T-cell (primary cell): ENCODE measurements at regions of chr20 and their contacts with region 1.

Region 1: DNA sequence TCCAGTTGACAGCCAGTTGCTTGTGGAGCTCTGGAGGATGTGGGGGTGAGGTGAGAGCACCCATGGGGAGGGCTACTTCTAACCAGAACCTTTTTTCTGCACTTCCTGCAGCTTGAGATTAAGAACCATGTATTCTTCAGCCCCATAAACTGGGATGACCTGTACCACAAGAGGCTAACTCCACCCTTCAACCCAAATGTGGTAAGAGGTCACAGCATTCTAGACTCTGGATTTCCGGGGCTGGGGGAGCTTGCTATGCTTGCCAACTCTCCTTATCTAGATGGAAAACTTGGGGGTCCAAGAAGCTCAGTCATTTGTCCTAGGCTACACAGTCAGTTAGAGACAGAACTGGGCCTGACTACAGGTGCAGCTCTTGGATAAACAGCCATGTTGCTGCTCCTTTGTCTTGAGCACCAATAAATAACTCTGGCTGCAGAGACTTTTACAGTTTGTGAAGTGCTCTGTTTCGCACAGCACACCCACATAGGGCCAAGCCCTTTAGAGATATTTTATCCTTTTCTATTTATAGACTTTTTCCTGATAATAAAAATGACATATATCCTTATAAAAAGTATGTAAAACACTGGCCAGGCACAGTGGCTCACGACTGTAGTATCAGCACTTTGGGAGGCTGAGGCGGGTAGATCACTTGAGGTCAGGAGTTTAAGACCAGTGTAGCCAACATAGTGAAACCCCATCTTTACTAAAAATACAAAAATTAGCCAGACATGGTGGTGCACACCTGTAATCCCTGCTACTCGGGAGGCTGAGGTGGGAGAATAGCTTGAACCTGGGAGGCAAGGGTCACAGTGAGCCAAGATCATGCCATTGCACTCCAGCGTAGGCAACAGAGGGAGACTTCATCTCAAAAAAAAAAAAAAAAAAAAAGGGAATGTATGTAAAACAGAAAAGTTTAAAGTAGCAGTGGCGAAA is 10.6 kb upstream of the IFT52 start:
- DNase-seq: no peak
- ATAC-seq: no peak
- H3K4me3 ChIP-seq: no peak overlapping the region
- H3K4me3 Mint-ChIP-seq: no peak overlapping the region
- H3K27ac ChIP-seq: no peak overlapping the region
- H3K27ac Mint-ChIP-seq: no peak overlapping the region
- H3K4me1 ChIP-seq: no peaks in the 10 kb centered on the region
- H3K4me1 Mint-ChIP-seq: peaks cover 0 to 3% (median 0%) of the 10 kb centered on the region in 3 donors
- H3K27me3 ChIP-seq: peaks cover 0 to 7% of the 10 kb centered on the region in 2 experiments
- H3K27me3 Mint-ChIP-seq: no peaks in the 10 kb centered on the region

Region 2: DNA sequence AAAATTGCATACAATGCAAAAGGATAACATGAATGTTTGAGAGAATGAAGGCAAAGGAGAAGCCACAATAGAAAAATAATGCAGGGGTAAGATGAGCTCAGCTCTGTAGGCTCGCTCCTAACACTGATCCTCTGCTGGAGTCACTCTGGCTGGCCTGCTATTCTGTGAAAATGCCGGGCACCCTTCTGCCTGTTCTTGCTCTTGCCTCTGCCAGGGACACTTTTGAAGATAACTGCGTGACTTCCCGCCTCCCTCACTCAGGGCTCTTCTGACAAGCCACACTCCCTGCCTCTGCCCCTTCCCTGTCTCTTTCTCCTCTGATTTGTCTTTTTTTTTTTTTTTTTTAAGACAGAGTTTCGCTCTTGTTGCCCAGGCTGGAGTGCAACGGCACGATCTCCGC is 51.5 kb after region 1 on chr20:
- CTCF ChIA-PET with region 1: no interaction called
- POLR2A ChIA-PET with region 1: no interaction called
- DNase-seq: no peak
- ATAC-seq: no peak
- H3K4me3 ChIP-seq: no peak overlapping the region
- H3K4me3 Mint-ChIP-seq: no peak overlapping the region
- H3K27ac ChIP-seq: no peak overlapping the region
- H3K27ac Mint-ChIP-seq: no peak overlapping the region
- H3K4me1 ChIP-seq: no peaks in the 10 kb centered on the region
- H3K4me1 Mint-ChIP-seq: no peaks in the 10 kb centered on the region
- H3K27me3 ChIP-seq: no peaks in the 10 kb centered on the region
- H3K27me3 Mint-ChIP-seq: no peaks in the 10 kb centered on the region

Region 3: GRCh38 chr20:44098657-44099056 is 518.5 kb after region 1 on chr20:
- CTCF ChIA-PET with region 1: no interaction called
- POLR2A ChIA-PET with region 1: interaction called in 1 of 2 experiments, 16 read pairs
- DNase-seq: no peak
- ATAC-seq: no peak
- H3K4me3 ChIP-seq: no peak overlapping the region
- H3K4me3 Mint-ChIP-seq: no peak overlapping the region
- H3K27ac ChIP-seq: no peak overlapping the region
- H3K27ac Mint-ChIP-seq: no peak overlapping the region
- H3K4me1 ChIP-seq: no peaks in the 10 kb centered on the region
- H3K4me1 Mint-ChIP-seq: no peaks in the 10 kb centered on the region
- H3K27me3 ChIP-seq: peaks cover 2 to 11% of the 10 kb centered on the region in 2 experiments
- H3K27me3 Mint-ChIP-seq: peaks cover 29 to 39% of the 10 kb centered on the region in 2 donors